ENCODE measurements at regions of chr7 and their contacts with region 1.

Region 1: GRCh38 chr7:101363734-101364374 is 1.2 kb downstream of the COL26A1 start:
- DNase-seq: peak; percentile 76 to 93 (median 90)
- ATAC-seq: peak; percentile 100
- H3K4me3 ChIP-seq: no peak overlapping the region; the same call in 1 of the 2 replicates
- H3K27ac ChIP-seq: no peak overlapping the region
- H3K4me1 ChIP-seq: peaks cover 0 to 12% of the 10 kb centered on the region in 2 experiments; a peak in 2 of 5 replicates
- H3K27me3 ChIP-seq: peaks cover 9 to 29% of the 10 kb centered on the region in 2 experiments; a peak in 3 of 5 replicates
- CTCF ChIP-seq: peak; percentile 84 to 94 (median 84)
- EP300 ChIP-seq: no peak
- POLR2A ChIP-seq: no peak
- RAD21 ChIP-seq: peak; percentile 60 to 74

Region 2: DNA sequence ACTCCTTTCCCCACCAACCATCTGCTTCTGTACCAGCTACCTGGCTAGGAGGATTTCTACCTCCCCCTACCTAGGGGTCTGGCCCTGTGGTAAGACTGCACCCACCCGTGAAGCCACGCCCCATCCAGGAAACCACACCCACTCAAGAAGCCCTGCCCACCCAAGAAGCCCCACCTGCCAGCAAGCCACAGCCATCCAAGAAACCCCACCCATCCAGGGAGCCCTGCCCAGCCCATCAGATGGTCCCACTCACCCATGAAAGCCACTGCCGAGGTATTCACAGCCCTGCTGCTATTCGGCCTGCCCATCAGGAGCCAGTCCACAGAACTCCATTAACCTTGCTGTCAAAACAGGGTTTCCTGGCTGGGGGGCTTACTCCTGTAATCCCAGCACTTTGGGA is 430.1 kb before region 1 on chr7:
- CTCF ChIA-PET with region 1: no interaction called
- POLR2A ChIA-PET with region 1: no interaction called
- in situ Hi-C with region 1: no loop called
- intact Hi-C with region 1: no loop called
- DNase-seq: peak; percentile 34 to 66 (median 56)
- ATAC-seq: peak; percentile 96
- H3K4me3 ChIP-seq: no peak overlapping the region
- H3K27ac ChIP-seq: no peak overlapping the region
- H3K4me1 ChIP-seq: peaks cover 0 to 7% of the 10 kb centered on the region in 2 experiments; a peak in 1 of 5 replicates
- H3K27me3 ChIP-seq: peaks cover 6% of the 10 kb centered on the region in 2 experiments; a peak in 3 of 5 replicates
- CTCF ChIP-seq: no peak
- EP300 ChIP-seq: no peak
- POLR2A ChIP-seq: no peak
- RAD21 ChIP-seq: no peak

Region 3: GRCh38 chr7:101410743-101411507 is 47.1 kb after region 1 on chr7:
- CTCF ChIA-PET with region 1: interaction called, 3 read pairs
- POLR2A ChIA-PET with region 1: no interaction called
- in situ Hi-C with region 1: no loop called
- intact Hi-C with region 1: loop called (anchors 10 kb)
- DNase-seq: peak; percentile 56 to 92 (median 86)
- ATAC-seq: peak; percentile 92
- H3K4me3 ChIP-seq: no peak overlapping the region
- H3K27ac ChIP-seq: no peak overlapping the region
- H3K4me1 ChIP-seq: peaks cover 0 to 6% of the 10 kb centered on the region in 2 experiments; a peak in 1 of 5 replicates
- H3K27me3 ChIP-seq: peaks cover 20 to 49% of the 10 kb centered on the region in 2 experiments
- CTCF ChIP-seq: peak; percentile 77 to 95 (median 83)
- EP300 ChIP-seq: no peak
- POLR2A ChIP-seq: no peak
- RAD21 ChIP-seq: peak in 1 of 2 experiments; percentile 54; a peak in 2 of 4 replicates

Measured in K562 (cell line).